Left cardiac atrium (tissue), 4 donors: ENCODE measurements at regions of chr4 and their contacts with region 1.

Region 1: GRCh38 chr4:158259955-158260575 is 49.8 kb downstream of the TMEM144 start:
- DNase-seq: no peak
- ATAC-seq: no peak

Region 2: GRCh38 chr4:158578476-158578875 is 318.4 kb after region 1 on chr4:
- intact Hi-C with region 1: no loop called
- DNase-seq: no peak
- ATAC-seq: no peak

Region 3: GRCh38 chr4:158624889-158625478 is 364.9 kb after region 1 on chr4:
- intact Hi-C with region 1: loop called in 1 of 2 experiments (anchors 5 kb)
- DNase-seq: no peak
- ATAC-seq: peak; percentile 77 to 81

Region 4: DNA sequence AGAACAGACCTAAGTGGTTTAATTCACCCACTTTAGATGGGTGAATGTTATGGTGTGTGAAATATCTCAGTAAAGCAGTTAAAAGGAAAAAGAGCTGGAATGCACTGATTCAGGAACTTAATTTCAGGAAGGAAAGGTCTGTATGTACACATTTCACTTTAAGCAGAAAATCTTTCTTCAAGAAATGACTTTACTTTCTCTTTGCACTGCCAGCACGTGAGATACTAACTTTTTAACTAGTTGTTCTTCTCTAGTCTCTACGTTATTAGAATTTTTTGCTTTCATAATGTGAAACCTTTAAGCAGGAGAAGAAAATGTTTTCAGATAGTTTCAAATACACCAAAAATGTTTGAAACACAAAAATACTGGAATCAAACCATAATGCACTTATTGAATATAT is 392.9 kb after region 1 on chr4:
- intact Hi-C with region 1: no loop called
- DNase-seq: no peak
- ATAC-seq: no peak